Activated CD4-positive, alpha-beta T cell treated with anti-CD3 and anti-CD28 coated beads, Interleukin-2, amount 10 ng/mL, durations not matched to agents 24 days and 14 days (primary cell): ENCODE measurements at regions of chr6 and their contacts with region 1.

Region 1: GRCh38 chr6:27893059-27893835 is 18.9 kb downstream of the OR2B2 start:
- DNase-seq: peak; percentile 98
- H3K4me3 Mint-ChIP-seq: no peak overlapping the region
- H3K27ac Mint-ChIP-seq: no peak overlapping the region
- H3K4me1 Mint-ChIP-seq: peaks cover 45% of the 10 kb centered on the region
- H3K27me3 Mint-ChIP-seq: no peaks in the 10 kb centered on the region

Region 2: GRCh38 chr6:26156076-26156849 is 1737.0 kb before region 1 on chr6:
- intact Hi-C with region 1: loop called (anchors 5 kb)
- DNase-seq: peak; percentile 97
- H3K4me3 Mint-ChIP-seq: peak overlapping the region; percentile 90
- H3K27ac Mint-ChIP-seq: peak overlapping the region; percentile 93
- H3K4me1 Mint-ChIP-seq: peaks cover 53% of the 10 kb centered on the region
- H3K27me3 Mint-ChIP-seq: peaks cover 11% of the 10 kb centered on the region

Region 3: DNA sequence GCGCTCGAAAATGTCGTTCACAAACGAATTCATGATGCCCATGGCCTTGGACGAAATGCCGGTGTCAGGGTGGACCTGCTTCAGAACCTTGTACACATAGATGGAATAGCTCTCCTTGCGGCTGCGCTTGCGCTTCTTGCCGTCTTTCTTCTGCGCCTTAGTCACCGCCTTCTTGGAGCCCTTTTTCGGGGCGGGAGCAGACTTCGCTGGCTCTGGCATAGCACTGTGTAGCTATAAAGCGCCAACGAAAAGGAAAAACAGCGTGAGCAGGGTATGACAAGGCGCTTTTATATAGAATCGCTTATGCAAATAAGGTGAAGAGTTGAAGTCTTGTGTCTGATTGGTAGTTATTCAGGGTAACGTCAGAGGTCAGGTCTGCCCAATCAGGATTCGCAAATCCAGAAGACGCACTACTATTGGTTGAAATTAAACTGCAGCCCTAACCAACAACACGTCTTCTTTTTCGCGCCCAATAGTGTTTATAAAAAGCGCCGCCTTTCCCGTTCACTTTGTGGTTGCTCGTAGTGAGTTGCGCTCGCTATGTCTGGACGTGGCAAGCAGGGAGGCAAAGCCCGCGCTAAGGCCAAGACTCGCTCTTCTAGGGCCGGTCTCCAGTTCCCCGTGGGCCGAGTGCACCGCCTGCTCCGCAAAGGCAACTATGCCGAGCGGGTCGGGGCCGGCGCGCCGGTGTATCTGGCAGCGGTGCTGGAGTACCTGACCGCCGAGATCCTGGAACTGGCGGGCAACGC is 760.5 kb before region 1 on chr6:
- intact Hi-C with region 1: loop called (anchors 2 kb)
- DNase-seq: peak; percentile 98
- H3K4me3 Mint-ChIP-seq: no peak overlapping the region
- H3K27ac Mint-ChIP-seq: no peak overlapping the region
- H3K4me1 Mint-ChIP-seq: peaks cover 37% of the 10 kb centered on the region
- H3K27me3 Mint-ChIP-seq: no peaks in the 10 kb centered on the region

Region 4: GRCh38 chr6:27479319-27480182 is 413.7 kb before region 1 on chr6:
- intact Hi-C with region 1: loop called (anchors 2 kb)
- DNase-seq: peak; percentile 96
- H3K4me3 Mint-ChIP-seq: no peak overlapping the region
- H3K27ac Mint-ChIP-seq: no peak overlapping the region
- H3K4me1 Mint-ChIP-seq: peaks cover 6% of the 10 kb centered on the region
- H3K27me3 Mint-ChIP-seq: peaks cover 9% of the 10 kb centered on the region

Region 5: GRCh38 chr6:27772261-27773001 is 120.8 kb before region 1 on chr6:
- intact Hi-C with region 1: loop called (anchors 1 kb)
- DNase-seq: peak; percentile 96
- H3K4me3 Mint-ChIP-seq: peak overlapping the region; percentile 55
- H3K27ac Mint-ChIP-seq: peak overlapping the region; percentile 23
- H3K4me1 Mint-ChIP-seq: peaks cover 14% of the 10 kb centered on the region
- H3K27me3 Mint-ChIP-seq: peaks cover 21% of the 10 kb centered on the region

Region 6: DNA sequence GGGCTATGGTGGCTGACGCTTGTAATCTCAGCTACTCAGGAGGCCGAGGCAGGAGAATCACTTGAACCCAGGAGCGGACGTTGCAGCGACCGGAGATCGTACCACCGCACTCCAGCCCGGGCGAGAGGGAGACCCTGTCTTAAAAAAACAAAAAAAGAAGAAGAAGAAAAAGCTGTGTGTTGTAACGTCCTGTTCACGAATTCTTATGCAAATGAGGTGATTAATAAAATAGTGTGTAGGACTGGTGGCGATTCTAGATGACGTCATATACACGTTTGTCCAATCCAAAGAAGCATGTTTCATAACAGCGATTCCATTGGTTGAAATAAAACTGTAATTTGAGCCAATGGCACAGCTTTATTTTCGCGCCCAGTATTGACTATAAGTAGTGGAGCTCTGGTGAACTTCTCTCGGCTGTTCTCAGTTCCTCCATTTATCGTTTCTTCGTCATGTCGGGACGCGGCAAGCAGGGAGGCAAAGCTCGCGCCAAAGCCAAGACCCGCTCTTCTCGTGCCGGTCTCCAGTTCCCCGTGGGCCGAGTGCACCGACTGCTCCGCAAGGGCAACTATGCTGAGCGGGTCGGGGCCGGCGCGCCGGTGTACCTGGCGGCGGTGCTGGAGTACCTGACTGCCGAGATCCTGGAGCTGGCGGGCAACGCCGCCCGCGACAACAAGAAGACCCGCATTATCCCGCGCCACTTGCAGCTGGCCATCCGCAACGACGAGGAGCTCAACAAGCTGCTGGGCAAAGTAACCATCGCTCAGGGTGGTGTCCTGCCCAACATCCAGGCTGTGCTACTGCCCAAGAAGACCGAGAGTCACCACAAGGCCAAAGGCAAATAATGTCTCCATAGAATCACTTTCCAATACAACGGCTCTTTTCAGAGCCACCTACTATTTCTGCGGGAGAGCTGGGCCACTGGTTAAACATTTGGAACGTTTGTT is 28.1 kb before region 1 on chr6:
- intact Hi-C with region 1: loop called (anchors 1 kb)
- DNase-seq: peak; percentile 95
- H3K4me3 Mint-ChIP-seq: peak overlapping the region; percentile 97
- H3K27ac Mint-ChIP-seq: peak overlapping the region; percentile 100
- H3K4me1 Mint-ChIP-seq: peaks cover 58% of the 10 kb centered on the region
- H3K27me3 Mint-ChIP-seq: peaks cover 2% of the 10 kb centered on the region

Region 7: DNA sequence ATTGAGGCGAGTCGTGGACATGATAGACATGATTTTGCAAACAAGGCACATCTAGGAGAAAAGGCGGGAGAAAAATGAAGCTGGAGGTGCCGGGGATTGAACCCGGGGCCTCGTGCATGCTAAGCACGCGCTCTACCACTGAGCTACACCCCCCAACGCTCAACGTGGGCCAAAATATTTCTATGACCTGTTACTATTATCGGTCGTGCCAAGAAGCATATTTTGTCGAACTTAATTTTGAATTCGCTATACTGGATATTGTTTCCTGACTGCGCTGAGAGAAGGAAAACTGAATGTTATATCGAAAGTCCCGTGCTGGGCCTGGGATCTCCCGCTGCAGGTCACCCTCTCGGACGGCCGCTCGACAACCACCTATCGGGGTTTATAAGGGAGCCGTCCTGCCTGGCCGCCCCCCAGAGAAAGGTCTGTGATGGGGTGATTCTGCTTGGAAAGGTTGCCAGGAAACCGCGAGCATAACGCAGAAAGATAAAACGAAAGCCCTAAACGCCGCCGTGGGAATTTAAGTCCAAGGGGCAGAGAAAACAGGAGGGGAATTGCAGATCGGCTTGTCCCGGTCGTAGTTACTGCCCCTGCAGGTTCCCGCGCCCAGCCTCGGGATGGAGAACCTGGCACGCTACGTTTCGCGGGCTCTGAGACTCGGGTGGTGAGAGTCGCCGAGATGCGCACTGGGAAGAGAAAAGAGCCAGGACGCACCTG is 970.5 kb after region 1 on chr6:
- intact Hi-C with region 1: loop called (anchors 5 kb)
- DNase-seq: peak; percentile 96
- H3K4me3 Mint-ChIP-seq: peak overlapping the region; percentile 95
- H3K27ac Mint-ChIP-seq: peak overlapping the region; percentile 83
- H3K4me1 Mint-ChIP-seq: peaks cover 33% of the 10 kb centered on the region
- H3K27me3 Mint-ChIP-seq: peaks cover 18% of the 10 kb centered on the region